BJ (cell line): ENCODE measurements at regions of chr2 and their contacts with region 1.

Region 1: DNA sequence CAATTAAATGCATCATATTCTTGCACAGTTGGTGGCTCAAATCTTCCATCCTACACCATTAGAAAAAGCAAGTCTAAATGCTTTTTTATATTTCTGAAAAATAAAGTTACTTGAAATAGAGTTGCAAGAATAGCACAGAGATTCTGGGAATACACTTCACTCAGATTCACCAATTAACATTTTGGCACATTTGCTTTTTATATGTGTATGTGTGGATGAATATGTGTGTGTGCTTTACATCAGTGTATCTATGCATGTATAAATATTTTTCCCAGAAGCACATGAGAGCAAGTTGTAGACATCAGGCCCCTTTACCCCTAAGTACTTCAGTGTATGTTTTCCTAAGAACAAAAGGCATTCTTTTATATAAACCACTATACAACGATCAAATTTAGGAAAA is 27.6 kb upstream of the MSH2 start:
- DNase-seq: no peak
- H3K4me3 ChIP-seq: no peak overlapping the region
- H3K27me3 ChIP-seq: peaks cover 2% of the 10 kb centered on the region
- CTCF ChIP-seq: no peak

Region 2: DNA sequence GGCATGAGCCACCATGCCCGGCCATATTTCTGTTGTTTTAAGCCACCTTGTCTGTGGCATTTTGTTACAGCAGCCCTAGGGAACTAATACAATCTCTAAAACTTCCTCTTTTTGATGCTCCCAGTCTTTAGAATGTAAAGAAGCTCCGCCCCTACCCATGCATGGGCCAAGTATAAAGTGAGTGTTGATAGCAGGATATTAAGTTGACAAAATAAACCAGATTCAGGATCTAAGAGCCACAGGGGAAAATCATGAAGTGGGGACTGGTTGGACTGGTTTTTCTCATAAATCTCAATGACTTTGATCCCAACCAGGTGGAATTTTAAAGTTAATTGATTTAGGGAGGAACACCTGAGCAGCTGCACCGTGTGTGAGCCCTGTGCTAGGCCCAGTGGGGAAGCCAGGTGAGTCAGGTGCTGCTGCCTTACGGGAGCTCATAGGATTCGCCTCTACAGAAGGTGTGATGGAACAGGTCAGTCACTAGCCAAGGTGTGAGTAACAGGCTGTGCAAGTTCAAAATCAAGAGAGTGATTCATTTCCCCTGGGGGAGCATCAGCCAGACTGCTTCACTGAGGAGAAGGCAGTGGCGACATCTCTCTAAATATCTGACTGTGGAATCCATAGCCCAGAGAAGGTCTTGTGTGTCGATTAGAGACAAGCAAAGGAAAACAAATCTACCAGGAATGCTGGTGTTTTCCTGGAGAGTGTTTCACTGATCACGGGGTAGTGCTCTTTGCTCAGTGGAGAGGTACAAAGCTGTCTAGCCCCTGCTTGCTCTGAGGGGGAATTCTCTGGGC is 35.4 kb before region 1 on chr2:
- CTCF ChIA-PET with region 1: interaction called, 10 read pairs
- POLR2A ChIA-PET with region 1: no interaction called
- DNase-seq: no peak
- H3K4me3 ChIP-seq: no peak overlapping the region
- H3K27me3 ChIP-seq: no peaks in the 10 kb centered on the region
- CTCF ChIP-seq: no peak

Region 3: GRCh38 chr2:47429795-47430194 is 54.5 kb after region 1 on chr2:
- CTCF ChIA-PET with region 1: no interaction called
- POLR2A ChIA-PET with region 1: interaction called, 11 read pairs
- DNase-seq: peak; percentile 24
- H3K4me3 ChIP-seq: no peak overlapping the region
- H3K27me3 ChIP-seq: no peaks in the 10 kb centered on the region
- CTCF ChIP-seq: no peak